Left cardiac atrium (tissue), 4 donors: ENCODE measurements at regions of chr2 and their contacts with region 1.

Region 1: DNA sequence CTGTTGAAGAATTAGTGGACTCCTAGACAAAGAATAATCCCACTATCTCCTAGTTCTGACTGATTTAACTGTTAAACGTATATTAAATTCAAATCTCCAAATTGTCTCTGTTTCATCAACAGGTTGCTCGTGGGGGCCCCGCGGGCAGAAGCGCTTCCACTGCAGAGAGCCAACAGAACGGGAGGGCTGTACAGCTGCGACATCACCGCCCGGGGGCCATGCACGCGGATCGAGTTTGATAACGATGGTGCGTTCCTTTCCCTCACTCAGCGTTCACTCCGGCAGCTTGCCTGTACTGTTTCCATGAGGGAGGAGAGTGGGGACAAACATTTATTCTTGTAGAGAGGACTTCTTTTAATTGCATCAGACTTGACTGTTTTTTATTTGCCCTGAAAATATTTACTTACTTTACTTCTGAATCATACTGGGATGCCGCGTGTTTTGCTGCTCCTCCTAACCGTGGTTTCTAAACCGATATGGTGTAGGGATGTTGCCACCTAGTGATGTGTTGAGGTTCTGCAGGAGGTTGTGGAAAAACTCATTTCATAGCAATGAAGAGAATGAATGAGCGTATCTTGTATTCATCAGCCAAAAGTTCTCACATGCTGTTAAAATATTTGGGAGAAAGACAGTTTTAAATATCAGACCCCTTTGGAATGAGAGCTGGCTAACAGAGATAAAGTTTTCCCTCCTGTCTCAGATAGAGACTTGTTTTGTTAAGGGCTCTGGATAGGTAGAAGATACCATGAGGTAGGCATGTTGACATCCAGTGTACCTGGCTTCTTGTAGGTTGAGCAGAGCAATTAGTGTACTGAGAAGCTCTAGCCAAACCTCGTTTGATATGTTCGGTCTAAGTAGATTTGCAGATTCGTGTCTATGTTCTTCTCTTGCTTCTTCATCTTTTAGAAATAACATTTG is 38.3 kb downstream of the ITGA6 start:
- DNase-seq: peak; percentile 72
- ATAC-seq: peak; percentile 79 to 81

Region 2: GRCh38 chr2:171703574-171704347 is 761.9 kb before region 1 on chr2:
- intact Hi-C with region 1: loop called in 1 of 2 experiments (anchors 10 kb)
- DNase-seq: no peak
- ATAC-seq: peak in 1 of 2 donors; percentile 44

Region 3: GRCh38 chr2:172172513-172173173 is 293.0 kb before region 1 on chr2:
- intact Hi-C with region 1: loop called (anchors 2 to 5 kb)
- DNase-seq: peak; percentile 72
- ATAC-seq: peak; percentile 100

Region 4: DNA sequence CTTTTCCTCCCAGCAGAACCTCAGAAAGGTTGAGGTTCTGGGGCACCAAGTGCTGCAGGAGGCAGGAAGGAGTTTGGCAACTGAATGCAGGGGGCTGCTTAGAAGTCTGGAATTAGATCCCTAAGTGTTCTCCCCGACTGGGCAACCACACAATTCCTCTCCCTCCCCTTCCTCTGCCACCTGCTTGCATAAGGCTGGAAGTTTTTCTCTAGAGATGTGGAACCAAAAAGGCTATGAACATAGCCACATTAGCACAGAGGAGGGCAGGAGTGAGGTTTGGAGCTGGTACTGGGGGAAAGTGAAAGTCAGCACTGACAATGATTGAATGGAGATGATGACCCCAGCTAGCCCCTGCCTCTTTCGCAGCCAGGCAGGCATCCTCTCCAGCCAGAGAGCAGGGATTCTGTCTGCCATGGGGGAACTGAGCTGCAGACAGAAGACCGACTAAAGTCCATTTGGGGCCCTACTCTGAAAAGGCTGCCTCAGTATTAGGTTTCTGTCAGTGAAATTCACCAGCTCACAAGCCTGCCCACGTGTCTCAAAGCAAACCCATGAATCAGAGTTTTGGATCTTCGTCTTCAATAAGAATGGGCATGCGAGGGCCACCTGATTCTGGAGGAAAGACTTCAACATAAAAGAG is 126.2 kb before region 1 on chr2:
- intact Hi-C with region 1: loop called in 1 of 2 experiments (anchors 5 kb)
- DNase-seq: no peak
- ATAC-seq: peak; percentile 36 to 41

Region 5: DNA sequence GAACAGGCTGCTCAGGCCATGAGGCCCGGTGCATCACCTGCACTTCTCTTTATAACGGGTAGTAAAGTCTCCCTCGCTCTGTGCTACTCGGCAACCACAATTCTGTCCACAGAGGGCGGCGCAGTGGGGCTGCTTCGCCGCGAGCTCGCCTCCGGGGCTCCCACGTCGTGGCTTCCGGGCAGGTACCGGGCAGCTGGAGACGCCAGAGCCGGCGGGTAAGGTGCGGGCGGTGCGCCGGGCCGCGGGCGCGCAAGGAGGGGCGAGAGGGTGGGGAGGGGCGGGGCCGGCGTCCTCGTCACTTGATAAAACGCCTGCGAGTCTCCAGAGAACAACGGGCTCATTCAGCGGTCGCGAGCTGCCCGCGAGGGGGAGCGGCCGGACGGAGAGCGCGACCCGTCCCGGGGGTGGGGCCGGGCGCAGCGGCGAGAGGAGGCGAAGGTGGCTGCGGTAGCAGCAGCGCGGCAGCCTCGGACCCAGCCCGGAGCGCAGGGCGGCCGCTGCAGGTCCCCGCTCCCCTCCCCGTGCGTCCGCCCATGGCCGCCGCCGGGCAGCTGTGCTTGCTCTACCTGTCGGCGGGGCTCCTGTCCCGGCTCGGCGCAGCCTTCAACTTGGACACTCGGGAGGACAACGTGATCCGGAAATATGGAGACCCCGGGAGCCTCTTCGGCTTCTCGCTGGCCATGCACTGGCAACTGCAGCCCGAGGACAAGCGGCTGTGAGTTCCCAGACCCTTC is 38.3 kb before region 1 on chr2 and contains the start of gene ITGA6:
- intact Hi-C with region 1: loop called in 1 of 2 experiments (anchors 5 kb)
- DNase-seq: peak; percentile 81
- ATAC-seq: peak; percentile 80 to 89
- total RNA-seq, gene ITGA6: 47.0 to 53.3 TPM